ENCODE measurements at regions of chr1 and their contacts with region 1.

Region 1: DNA sequence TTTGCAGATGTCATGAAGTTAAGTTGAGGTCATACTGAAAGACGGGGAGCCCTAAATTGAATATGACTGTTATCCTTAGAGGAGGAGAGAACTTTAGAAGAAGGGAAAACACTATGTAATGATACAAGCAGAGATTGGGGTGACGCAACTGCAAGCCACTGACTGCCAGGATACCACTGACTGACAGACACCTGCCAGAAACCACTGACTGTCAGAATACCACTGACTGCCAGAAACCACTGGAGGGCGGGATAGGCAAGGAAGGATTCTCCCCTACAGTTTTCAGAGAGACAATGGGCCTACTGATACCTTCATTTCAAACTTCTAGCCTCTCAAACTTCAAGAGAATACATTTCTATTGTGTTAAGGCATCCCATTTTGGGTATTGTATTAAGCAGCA is 388.7 kb downstream of the USH2A start:
- DNase-seq: peak; percentile 60
- ATAC-seq: peak; percentile 91
- H3K4me3 ChIP-seq: no peak overlapping the region
- H3K27ac ChIP-seq: no peak overlapping the region
- H3K4me1 ChIP-seq: no peaks in the 10 kb centered on the region
- H3K27me3 ChIP-seq: peaks cover 22% of the 10 kb centered on the region
- CTCF ChIP-seq: peak; percentile 67

Region 2: GRCh38 chr1:215957663-215958062 is 76.8 kb before region 1 on chr1:
- CTCF ChIA-PET with region 1: no interaction called
- POLR2A ChIA-PET with region 1: no interaction called
- intact Hi-C with region 1: no loop called
- DNase-seq: no peak
- ATAC-seq: no peak
- H3K4me3 ChIP-seq: no peak overlapping the region
- H3K27ac ChIP-seq: no peak overlapping the region
- H3K4me1 ChIP-seq: no peaks in the 10 kb centered on the region
- H3K27me3 ChIP-seq: peaks cover 68% of the 10 kb centered on the region
- CTCF ChIP-seq: no peak

Region 3: GRCh38 chr1:216119602-216120001 is 85.1 kb after region 1 on chr1:
- CTCF ChIA-PET with region 1: no interaction called
- POLR2A ChIA-PET with region 1: no interaction called
- intact Hi-C with region 1: no loop called
- DNase-seq: peak; percentile 75
- ATAC-seq: peak; percentile 93
- H3K4me3 ChIP-seq: no peak overlapping the region
- H3K27ac ChIP-seq: no peak overlapping the region
- H3K4me1 ChIP-seq: no peaks in the 10 kb centered on the region
- H3K27me3 ChIP-seq: peaks cover 47% of the 10 kb centered on the region
- CTCF ChIP-seq: peak; percentile 87

Region 4: GRCh38 chr1:216554934-216555333 is 520.4 kb after region 1 on chr1:
- CTCF ChIA-PET with region 1: no interaction called
- POLR2A ChIA-PET with region 1: no interaction called
- intact Hi-C with region 1: loop called (anchors 2 kb)
- DNase-seq: peak; percentile 52
- ATAC-seq: peak; percentile 55
- H3K4me3 ChIP-seq: no peak overlapping the region
- H3K27ac ChIP-seq: no peak overlapping the region
- H3K4me1 ChIP-seq: peaks cover 10% of the 10 kb centered on the region
- H3K27me3 ChIP-seq: no peaks in the 10 kb centered on the region
- CTCF ChIP-seq: no peak

Region 5: GRCh38 chr1:216566641-216567205 is 532.2 kb after region 1 on chr1:
- CTCF ChIA-PET with region 1: no interaction called
- POLR2A ChIA-PET with region 1: no interaction called
- intact Hi-C with region 1: loop called (anchors 2 kb)
- DNase-seq: peak; percentile 82
- ATAC-seq: peak; percentile 85
- H3K4me3 ChIP-seq: no peak overlapping the region
- H3K27ac ChIP-seq: no peak overlapping the region
- H3K4me1 ChIP-seq: no peaks in the 10 kb centered on the region
- H3K27me3 ChIP-seq: peaks cover 27% of the 10 kb centered on the region
- CTCF ChIP-seq: peak; percentile 95